ENCODE measurements at regions of chr1 and their contacts with region 1.

Region 1: GRCh38 chr1:32221980-32222755 is at the starts of genes EIF3I and TMEM234:
- DNase-seq: peak; percentile 89
- H3K4me3 Mint-ChIP-seq: peak within 1 kb of the TSS; percentile 98
- H3K27ac Mint-ChIP-seq: peak within 1 kb of the TSS; percentile 95
- H3K4me1 Mint-ChIP-seq: peaks cover 25% of the 10 kb centered on the region
- H3K27me3 Mint-ChIP-seq: no peaks in the 10 kb centered on the region
- total RNA-seq, gene EIF3I: 297 TPM in 2 replicates
- total RNA-seq, gene TMEM234: 13.5 and 15.0 TPM in 2 replicates

Region 2: DNA sequence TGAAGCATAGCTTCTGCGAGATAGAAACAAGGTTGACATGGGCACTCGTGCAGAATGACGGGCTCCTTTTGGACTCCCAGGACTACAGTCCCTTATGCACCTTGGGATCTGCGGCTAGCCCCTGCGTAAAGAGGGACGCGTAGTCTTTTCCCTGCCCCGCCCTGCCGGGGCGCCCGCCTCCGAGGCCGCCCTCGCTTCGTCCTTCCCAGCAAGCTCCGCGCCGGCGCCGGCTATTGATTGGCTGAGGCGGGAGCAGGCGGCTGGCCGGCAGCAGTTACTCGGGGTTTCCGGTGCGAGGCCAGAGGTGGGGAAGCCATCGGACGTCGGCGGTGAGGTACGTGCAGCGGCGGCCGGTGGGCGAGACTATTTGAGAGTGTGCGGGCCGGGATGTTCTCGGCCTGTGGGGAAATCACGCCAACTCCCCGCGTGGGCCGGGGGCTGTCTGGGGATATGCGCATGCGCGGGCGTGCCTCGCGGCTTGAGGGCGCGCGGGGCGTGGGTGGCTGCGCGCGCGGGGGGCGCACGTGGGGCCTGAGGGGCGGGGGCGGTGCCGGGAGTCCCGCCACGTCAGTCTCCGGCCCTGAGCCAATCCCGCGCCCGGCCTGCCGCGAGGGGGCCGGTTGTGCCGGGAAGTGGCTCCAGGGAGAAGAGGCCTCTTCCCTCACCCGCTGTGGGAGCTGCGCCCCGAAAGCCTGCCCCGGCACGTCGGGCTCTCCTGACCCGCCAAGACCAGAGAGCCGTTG is 42.6 kb before region 1 on chr1 and contains the start of gene TXLNA:
- intact Hi-C with region 1: loop called (anchors 1 kb)
- DNase-seq: peak; percentile 89
- H3K4me3 Mint-ChIP-seq: peak within 1 kb of the TSS; percentile 96
- H3K27ac Mint-ChIP-seq: peak within 1 kb of the TSS; percentile 93
- H3K4me1 Mint-ChIP-seq: peaks cover 47% of the 10 kb centered on the region
- H3K27me3 Mint-ChIP-seq: no peaks in the 10 kb centered on the region
- total RNA-seq, gene TXLNA: 109 and 110 TPM in 2 replicates

Region 3: GRCh38 chr1:32200226-32201010 is 21.8 kb before region 1 on chr1 and contains the start of gene CCDC28B:
- intact Hi-C with region 1: loop called (anchors 1 kb)
- DNase-seq: peak; percentile 55
- H3K4me3 Mint-ChIP-seq: peak within 1 kb of the TSS; percentile 92
- H3K27ac Mint-ChIP-seq: peak within 1 kb of the TSS; percentile 97
- H3K4me1 Mint-ChIP-seq: peaks cover 69% of the 10 kb centered on the region
- H3K27me3 Mint-ChIP-seq: no peaks in the 10 kb centered on the region
- total RNA-seq, gene CCDC28B: 28.2 and 32.6 TPM in 2 replicates

Region 4: DNA sequence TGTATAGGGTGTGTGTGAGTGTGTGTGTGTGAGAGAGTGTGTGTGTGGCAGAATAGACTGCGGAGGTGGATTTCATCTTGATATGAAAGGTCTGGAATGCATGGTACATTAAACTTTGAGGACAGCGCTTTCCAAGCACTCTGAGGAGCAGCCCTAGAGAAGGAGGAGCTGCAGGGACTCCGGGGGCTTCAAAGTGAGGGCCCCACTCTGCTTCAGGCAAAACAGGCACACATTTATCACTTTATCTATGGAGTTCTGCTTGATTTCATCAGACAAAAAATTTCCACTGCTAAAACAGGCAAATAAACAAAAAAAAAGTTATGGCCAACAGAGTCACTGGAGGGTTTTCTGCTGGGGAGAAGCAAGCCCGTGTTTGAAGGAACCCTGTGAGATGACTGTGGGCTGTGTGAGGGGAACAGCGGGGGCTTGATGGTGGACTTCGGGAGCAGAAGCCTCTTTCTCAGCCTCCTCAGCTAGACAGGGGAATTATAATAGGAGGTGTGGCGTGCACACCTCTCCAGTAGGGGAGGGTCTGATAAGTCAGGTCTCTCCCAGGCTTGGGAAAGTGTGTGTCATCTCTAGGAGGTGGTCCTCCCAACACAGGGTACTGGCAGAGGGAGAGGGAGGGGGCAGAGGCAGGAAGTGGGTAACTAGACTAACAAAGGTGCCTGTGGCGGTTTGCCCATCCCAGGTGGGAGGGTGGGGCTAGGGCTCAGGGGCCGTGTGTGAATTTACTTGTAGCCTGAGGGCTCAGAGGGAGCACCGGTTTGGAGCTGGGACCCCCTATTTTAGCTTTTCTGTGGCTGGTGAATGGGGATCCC is 51.4 kb after region 1 on chr1:
- intact Hi-C with region 1: loop called (anchors 10 kb)
- DNase-seq: peak; percentile 57
- H3K4me3 Mint-ChIP-seq: peak overlapping the region; percentile 67
- H3K27ac Mint-ChIP-seq: peak overlapping the region; percentile 89
- H3K4me1 Mint-ChIP-seq: peaks cover 42% of the 10 kb centered on the region
- H3K27me3 Mint-ChIP-seq: no peaks in the 10 kb centered on the region

Region 5: DNA sequence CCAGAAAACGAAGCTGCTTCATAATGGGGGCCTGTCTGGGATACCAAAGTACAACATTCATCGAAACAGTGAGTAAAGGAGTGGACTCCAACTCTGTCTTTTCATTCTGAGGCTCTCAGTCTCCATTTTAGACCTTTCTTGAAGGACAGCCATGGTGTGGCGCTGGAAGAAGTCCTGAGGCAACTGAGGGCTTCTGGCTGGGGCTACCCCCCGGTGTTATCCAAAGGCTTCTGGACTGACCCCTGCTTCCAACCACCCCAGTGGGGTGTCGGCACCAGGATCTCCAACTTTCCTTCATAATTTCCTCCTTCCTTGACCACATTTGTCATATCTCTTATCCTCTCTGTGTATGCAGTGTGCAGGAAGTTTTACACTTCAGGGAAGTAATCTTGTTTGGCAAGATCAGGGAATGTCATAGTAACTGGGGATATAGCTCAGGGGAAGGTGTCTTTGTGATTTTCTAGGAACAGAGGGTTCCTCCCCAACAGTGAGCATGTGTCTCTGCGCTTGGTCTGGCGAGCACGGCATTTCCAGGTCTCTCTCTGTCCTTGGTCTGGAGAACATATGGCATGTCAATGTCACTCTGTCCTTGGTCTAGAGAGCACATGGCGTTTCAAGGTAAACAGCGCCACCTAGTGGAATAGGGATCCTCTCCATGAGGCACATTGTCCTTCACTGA is 191.5 kb after region 1 on chr1:
- intact Hi-C with region 1: loop called (anchors 2 kb)
- DNase-seq: peak; percentile 62
- H3K4me3 Mint-ChIP-seq: no peak overlapping the region
- H3K27ac Mint-ChIP-seq: no peak overlapping the region
- H3K4me1 Mint-ChIP-seq: peaks cover 4% of the 10 kb centered on the region
- H3K27me3 Mint-ChIP-seq: peaks cover 18% of the 10 kb centered on the region